ENCODE measurements at regions of chr7 and their contacts with region 1.

Region 1: GRCh38 chr7:44490351-44491200 is at the start of gene NUDCD3:
- DNase-seq: peak; percentile 63 to 91 (median 82)
- ATAC-seq: peak; percentile 67
- H3K4me3 ChIP-seq: peak within 1 kb of the TSS; percentile 77 to 97
- H3K4me3 Mint-ChIP-seq: peak within 1 kb of the TSS; percentile 88
- H3K27ac ChIP-seq: peak within 1 kb of the TSS; percentile 95 to 100
- H3K27ac Mint-ChIP-seq: peak within 1 kb of the TSS; percentile 97
- H3K4me1 ChIP-seq: peaks cover 42% of the 10 kb centered on the region
- H3K4me1 Mint-ChIP-seq: peaks cover 47% of the 10 kb centered on the region
- H3K27me3 ChIP-seq: no peaks in the 10 kb centered on the region
- H3K27me3 Mint-ChIP-seq: peaks cover 2% of the 10 kb centered on the region
- CTCF ChIP-seq: no peak
- total RNA-seq, gene NUDCD3: 40.6 to 45.9 TPM

Region 2: DNA sequence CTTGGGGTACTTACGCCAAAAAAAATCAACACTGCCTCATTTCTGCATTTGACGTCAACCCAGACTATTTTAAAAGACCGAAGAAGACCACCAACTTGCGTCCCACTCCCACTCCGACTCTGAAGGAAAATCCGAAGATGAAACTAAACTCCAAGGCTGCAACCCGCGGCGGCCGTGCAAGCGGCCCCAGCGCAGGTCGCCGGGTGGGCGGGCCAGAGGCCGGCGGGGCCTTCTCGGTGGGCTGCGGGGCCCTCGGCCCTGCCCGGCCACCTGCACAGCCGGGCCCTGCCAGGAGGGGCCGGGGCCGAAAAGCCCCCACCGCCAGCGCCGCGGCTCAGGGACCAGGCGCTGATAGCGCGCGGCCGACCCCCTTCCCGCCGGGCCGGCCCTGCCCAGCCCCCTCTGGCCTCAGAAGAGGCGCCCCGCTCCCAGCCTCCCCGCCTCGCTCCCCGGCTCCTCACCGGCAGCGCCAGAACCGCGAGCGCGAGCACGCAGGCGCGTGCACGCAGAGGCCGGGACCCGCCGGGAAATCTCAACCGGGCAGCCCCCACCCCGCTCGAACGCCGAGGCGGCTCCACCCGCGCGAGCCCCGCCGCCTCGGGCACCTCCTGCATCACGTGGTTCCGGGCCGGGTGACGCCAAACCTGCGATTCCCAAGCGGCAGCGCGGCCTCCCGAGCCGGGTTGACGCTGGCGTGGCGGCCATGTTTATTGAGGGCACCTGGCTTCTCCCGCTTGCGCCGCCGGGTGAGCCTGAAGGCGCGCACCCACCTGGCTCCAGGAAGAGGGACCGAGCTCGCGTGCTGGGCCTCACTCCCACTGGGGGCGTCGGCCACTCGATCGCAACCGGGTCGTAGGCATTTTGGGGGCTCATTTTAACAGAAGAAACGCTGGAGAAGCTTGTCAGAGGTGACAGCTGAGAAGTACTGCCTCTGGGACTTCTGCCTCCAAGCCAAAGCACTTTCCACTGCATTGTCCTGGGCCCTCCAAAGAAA is 1578.8 kb before region 1 on chr7 and contains the start of gene C7orf25:
- CTCF ChIA-PET with region 1: no interaction called
- POLR2A ChIA-PET with region 1: no interaction called
- intact Hi-C with region 1: loop called in 1 of 2 experiments (anchors 2 kb)
- DNase-seq: peak; percentile 87 to 97 (median 95)
- ATAC-seq: peak; percentile 92
- H3K4me3 ChIP-seq: peak within 1 kb of the TSS; percentile 51 to 65
- H3K4me3 Mint-ChIP-seq: peak within 1 kb of the TSS; percentile 87
- H3K27ac ChIP-seq: peak within 1 kb of the TSS; percentile 54 to 77
- H3K27ac Mint-ChIP-seq: peak within 1 kb of the TSS; percentile 93
- H3K4me1 ChIP-seq: peaks cover 34% of the 10 kb centered on the region
- H3K4me1 Mint-ChIP-seq: peaks cover 50% of the 10 kb centered on the region
- H3K27me3 ChIP-seq: no peaks in the 10 kb centered on the region
- H3K27me3 Mint-ChIP-seq: no peaks in the 10 kb centered on the region
- CTCF ChIP-seq: no peak
- total RNA-seq, gene C7orf25: 2.1 to 2.2 TPM

Region 3: DNA sequence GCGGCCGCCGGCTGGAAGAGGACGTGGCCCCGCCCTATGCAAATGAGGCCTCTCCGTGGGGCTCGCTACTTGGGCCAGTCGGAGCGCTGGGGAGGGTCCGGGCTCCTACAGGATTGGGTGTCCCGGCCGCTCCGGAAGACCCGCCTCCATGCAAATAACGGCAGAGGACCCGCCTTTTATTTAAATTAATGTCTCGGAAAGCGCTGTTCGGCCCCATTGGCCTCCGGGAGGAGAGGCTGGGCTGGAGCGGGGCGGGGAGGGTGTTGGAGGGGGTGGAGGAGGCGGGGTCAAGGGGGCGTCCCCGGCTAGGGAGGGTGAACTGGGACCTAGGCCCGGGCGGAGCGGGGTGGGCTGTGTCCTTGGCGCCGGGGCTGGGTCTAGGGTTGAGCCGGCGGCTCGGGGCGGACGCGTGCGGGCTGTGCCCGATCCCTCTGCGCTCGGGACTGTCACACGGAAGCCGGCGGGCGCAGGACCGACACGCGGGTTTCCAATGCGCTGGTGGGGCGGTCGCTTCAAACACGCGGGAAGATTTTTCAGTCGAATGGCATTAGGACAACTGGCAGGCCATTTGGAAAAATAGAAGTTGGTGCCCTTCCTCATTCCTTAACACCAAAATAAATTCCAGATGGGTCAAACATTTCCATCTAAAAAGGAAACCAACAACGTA is 407.9 kb before region 1 on chr7:
- CTCF ChIA-PET with region 1: interaction called, 3 read pairs
- POLR2A ChIA-PET with region 1: interaction called, 3 read pairs
- intact Hi-C with region 1: loop called in 1 of 2 experiments (anchors 1 kb)
- DNase-seq: peak; percentile 94 to 100 (median 97)
- ATAC-seq: peak; percentile 93
- H3K4me3 ChIP-seq: peak overlapping the region; percentile 51 to 63
- H3K4me3 Mint-ChIP-seq: peak overlapping the region; percentile 88
- H3K27ac ChIP-seq: peak overlapping the region; percentile 54 to 78
- H3K27ac Mint-ChIP-seq: peak overlapping the region; percentile 82
- H3K4me1 ChIP-seq: peaks cover 26% of the 10 kb centered on the region
- H3K4me1 Mint-ChIP-seq: peaks cover 33% of the 10 kb centered on the region
- H3K27me3 ChIP-seq: no peaks in the 10 kb centered on the region
- H3K27me3 Mint-ChIP-seq: no peaks in the 10 kb centered on the region
- CTCF ChIP-seq: no peak

Region 4: GRCh38 chr7:44257618-44258422 is 232.8 kb before region 1 on chr7:
- CTCF ChIA-PET with region 1: no interaction called
- POLR2A ChIA-PET with region 1: interaction called, 14 read pairs
- intact Hi-C with region 1: no loop called
- DNase-seq: peak; percentile 24 to 80 (median 65)
- ATAC-seq: peak; percentile 91
- H3K4me3 ChIP-seq: peak overlapping the region in 1 of 2 experiments; percentile 4
- H3K4me3 Mint-ChIP-seq: peak overlapping the region; percentile 61
- H3K27ac ChIP-seq: peak overlapping the region; percentile 69 to 86
- H3K27ac Mint-ChIP-seq: peak overlapping the region; percentile 88
- H3K4me1 ChIP-seq: peaks cover 31% of the 10 kb centered on the region
- H3K4me1 Mint-ChIP-seq: peaks cover 23% of the 10 kb centered on the region
- H3K27me3 ChIP-seq: no peaks in the 10 kb centered on the region
- H3K27me3 Mint-ChIP-seq: no peaks in the 10 kb centered on the region
- CTCF ChIP-seq: no peak

Region 5: GRCh38 chr7:44573464-44574286 is 83.1 kb after region 1 on chr7 and contains the start of gene DDX56:
- CTCF ChIA-PET with region 1: no interaction called
- POLR2A ChIA-PET with region 1: interaction called, 8 read pairs
- intact Hi-C with region 1: loop called in 1 of 2 experiments (anchors 2 kb)
- DNase-seq: peak; percentile 75 to 96 (median 93)
- ATAC-seq: peak; percentile 96
- H3K4me3 ChIP-seq: peak within 1 kb of the TSS; percentile 92 to 94
- H3K4me3 Mint-ChIP-seq: peak within 1 kb of the TSS; percentile 96
- H3K27ac ChIP-seq: peak within 1 kb of the TSS; percentile 91 to 94
- H3K27ac Mint-ChIP-seq: peak within 1 kb of the TSS; percentile 99
- H3K4me1 ChIP-seq: peaks cover 28% of the 10 kb centered on the region
- H3K4me1 Mint-ChIP-seq: peaks cover 51% of the 10 kb centered on the region
- H3K27me3 ChIP-seq: no peaks in the 10 kb centered on the region
- H3K27me3 Mint-ChIP-seq: no peaks in the 10 kb centered on the region
- CTCF ChIP-seq: no peak
- total RNA-seq, gene DDX56: 140 to 141 TPM

Region 6: GRCh38 chr7:44748045-44748947 is 257.7 kb after region 1 on chr7 and contains the start of gene ZMIZ2:
- CTCF ChIA-PET with region 1: interaction called, 3 read pairs
- POLR2A ChIA-PET with region 1: no interaction called
- intact Hi-C with region 1: loop called (anchors 2 to 5 kb)
- DNase-seq: peak; percentile 84 to 98 (median 92)
- ATAC-seq: peak; percentile 91
- H3K4me3 ChIP-seq: peak within 1 kb of the TSS; percentile 77 to 80
- H3K4me3 Mint-ChIP-seq: peak within 1 kb of the TSS; percentile 79
- H3K27ac ChIP-seq: peak within 1 kb of the TSS; percentile 83
- H3K27ac Mint-ChIP-seq: peak within 1 kb of the TSS; percentile 90
- H3K4me1 ChIP-seq: peaks cover 27% of the 10 kb centered on the region
- H3K4me1 Mint-ChIP-seq: peaks cover 35% of the 10 kb centered on the region
- H3K27me3 ChIP-seq: no peaks in the 10 kb centered on the region
- H3K27me3 Mint-ChIP-seq: no peaks in the 10 kb centered on the region
- CTCF ChIP-seq: no peak
- total RNA-seq, gene ZMIZ2: 67.1 to 71.3 TPM

Region 7: GRCh38 chr7:45111298-45112223 is 621.0 kb after region 1 on chr7 and contains the start of gene TBRG4:
- CTCF ChIA-PET with region 1: no interaction called
- POLR2A ChIA-PET with region 1: no interaction called
- intact Hi-C with region 1: loop called in 1 of 2 experiments (anchors 10 kb)
- DNase-seq: peak; percentile 84 to 98 (median 94)
- ATAC-seq: peak; percentile 83
- H3K4me3 ChIP-seq: peak within 1 kb of the TSS; percentile 67 to 96
- H3K4me3 Mint-ChIP-seq: peak within 1 kb of the TSS; percentile 90
- H3K27ac ChIP-seq: peak within 1 kb of the TSS; percentile 94 to 99
- H3K27ac Mint-ChIP-seq: peak within 1 kb of the TSS; percentile 97
- H3K4me1 ChIP-seq: peaks cover 48% of the 10 kb centered on the region
- H3K4me1 Mint-ChIP-seq: peaks cover 48% of the 10 kb centered on the region
- H3K27me3 ChIP-seq: no peaks in the 10 kb centered on the region
- H3K27me3 Mint-ChIP-seq: no peaks in the 10 kb centered on the region
- CTCF ChIP-seq: no peak
- total RNA-seq, gene TBRG4: 75.3 to 79.7 TPM